ENCODE measurements at regions of chr1 and their contacts with region 1.

Region 1: GRCh38 chr1:27603681-27604578 is at the start of gene AHDC1:
- DNase-seq: peak; percentile 96
- H3K4me3 ChIP-seq: peak within 1 kb of the TSS; percentile 87
- H3K27ac ChIP-seq: peak within 1 kb of the TSS; percentile 87
- H3K4me1 ChIP-seq: peaks cover 50% of the 10 kb centered on the region
- H3K27me3 ChIP-seq: no peaks in the 10 kb centered on the region
- CTCF ChIP-seq: no peak
- total RNA-seq, gene AHDC1: 33.2 and 34.2 TPM in 2 replicates

Region 2: GRCh38 chr1:27300341-27301051 is 303.4 kb before region 1 on chr1:
- CTCF ChIA-PET with region 1: interaction called, 7 read pairs
- POLR2A ChIA-PET with region 1: no interaction called
- intact Hi-C with region 1: loop called (anchors 5 kb)
- DNase-seq: peak; percentile 92
- H3K4me3 ChIP-seq: no peak overlapping the region
- H3K27ac ChIP-seq: no peak overlapping the region
- H3K4me1 ChIP-seq: peaks cover 4% of the 10 kb centered on the region
- H3K27me3 ChIP-seq: no peaks in the 10 kb centered on the region
- CTCF ChIP-seq: peak; percentile 96

Region 3: GRCh38 chr1:27392096-27392777 is 211.7 kb before region 1 on chr1 and contains the start of gene GPR3:
- CTCF ChIA-PET with region 1: interaction called, 10 read pairs
- POLR2A ChIA-PET with region 1: no interaction called
- intact Hi-C with region 1: loop called (anchors 1 kb)
- DNase-seq: peak; percentile 96
- H3K4me3 ChIP-seq: peak within 1 kb of the TSS; percentile 81
- H3K27ac ChIP-seq: peak within 1 kb of the TSS; percentile 80
- H3K4me1 ChIP-seq: peaks cover 12% of the 10 kb centered on the region
- H3K27me3 ChIP-seq: no peaks in the 10 kb centered on the region
- CTCF ChIP-seq: peak; percentile 82
- total RNA-seq, gene GPR3: 3.1 and 4.9 TPM in 2 replicates

Region 4: GRCh38 chr1:27428316-27429028 is 175.5 kb before region 1 on chr1:
- CTCF ChIA-PET with region 1: interaction called, 13 read pairs
- POLR2A ChIA-PET with region 1: no interaction called
- intact Hi-C with region 1: no loop called
- DNase-seq: no peak
- H3K4me3 ChIP-seq: no peak overlapping the region
- H3K27ac ChIP-seq: peak overlapping the region; percentile 52
- H3K4me1 ChIP-seq: peaks cover 41% of the 10 kb centered on the region
- H3K27me3 ChIP-seq: no peaks in the 10 kb centered on the region
- CTCF ChIP-seq: no peak

Region 5: DNA sequence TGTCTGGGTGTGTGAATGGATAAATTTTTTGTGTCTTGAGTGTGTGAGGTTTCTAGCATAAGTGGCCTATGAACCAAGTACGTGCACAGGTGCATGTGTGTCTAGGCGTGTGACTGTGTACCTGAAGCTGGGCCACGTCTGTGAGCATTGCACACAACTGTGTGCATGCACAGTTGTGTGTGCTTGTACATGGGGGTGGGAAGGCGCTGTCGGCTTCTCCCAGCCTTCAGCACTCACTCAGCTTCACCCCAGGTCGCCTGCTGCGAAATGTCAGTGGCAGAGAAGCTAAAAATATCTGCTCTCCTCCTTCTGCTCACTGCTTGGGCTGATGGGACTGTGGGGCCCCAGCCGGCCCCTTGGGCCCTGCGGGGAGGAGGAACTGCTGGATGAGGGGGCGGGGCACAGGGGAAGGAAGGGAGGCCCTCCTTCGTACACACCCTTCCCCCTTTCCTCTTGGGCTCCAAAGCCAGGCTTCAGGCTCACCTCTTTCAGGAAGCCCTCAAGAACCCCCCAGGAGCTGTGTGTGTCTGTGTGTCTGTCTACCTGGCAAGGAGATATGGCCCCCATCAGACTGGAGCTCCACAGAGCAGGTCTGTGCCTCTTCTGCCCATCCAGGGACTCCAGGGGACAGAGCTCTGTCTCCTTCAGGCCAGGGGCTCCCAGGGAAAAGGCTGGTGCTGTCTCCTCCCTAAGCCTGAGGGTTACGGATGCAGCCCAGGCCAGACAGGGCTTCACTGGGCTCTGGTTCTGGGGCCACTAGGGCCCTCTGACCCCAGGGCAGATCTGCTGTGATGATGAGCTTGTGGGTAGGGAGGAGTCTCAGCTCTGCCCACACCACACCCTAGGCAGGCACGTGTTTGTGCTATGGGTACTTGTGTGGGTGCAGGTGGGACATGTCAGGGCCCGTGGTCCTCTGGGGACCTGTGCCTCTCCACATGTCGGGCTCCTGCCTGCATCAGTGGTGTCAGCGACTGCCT is 78.3 kb before region 1 on chr1:
- CTCF ChIA-PET with region 1: no interaction called
- POLR2A ChIA-PET with region 1: no interaction called
- intact Hi-C with region 1: no loop called
- DNase-seq: peak; percentile 82
- H3K4me3 ChIP-seq: no peak overlapping the region
- H3K27ac ChIP-seq: peak overlapping the region; percentile 68
- H3K4me1 ChIP-seq: peaks cover 67% of the 10 kb centered on the region
- H3K27me3 ChIP-seq: no peaks in the 10 kb centered on the region
- CTCF ChIP-seq: no peak

Region 6: DNA sequence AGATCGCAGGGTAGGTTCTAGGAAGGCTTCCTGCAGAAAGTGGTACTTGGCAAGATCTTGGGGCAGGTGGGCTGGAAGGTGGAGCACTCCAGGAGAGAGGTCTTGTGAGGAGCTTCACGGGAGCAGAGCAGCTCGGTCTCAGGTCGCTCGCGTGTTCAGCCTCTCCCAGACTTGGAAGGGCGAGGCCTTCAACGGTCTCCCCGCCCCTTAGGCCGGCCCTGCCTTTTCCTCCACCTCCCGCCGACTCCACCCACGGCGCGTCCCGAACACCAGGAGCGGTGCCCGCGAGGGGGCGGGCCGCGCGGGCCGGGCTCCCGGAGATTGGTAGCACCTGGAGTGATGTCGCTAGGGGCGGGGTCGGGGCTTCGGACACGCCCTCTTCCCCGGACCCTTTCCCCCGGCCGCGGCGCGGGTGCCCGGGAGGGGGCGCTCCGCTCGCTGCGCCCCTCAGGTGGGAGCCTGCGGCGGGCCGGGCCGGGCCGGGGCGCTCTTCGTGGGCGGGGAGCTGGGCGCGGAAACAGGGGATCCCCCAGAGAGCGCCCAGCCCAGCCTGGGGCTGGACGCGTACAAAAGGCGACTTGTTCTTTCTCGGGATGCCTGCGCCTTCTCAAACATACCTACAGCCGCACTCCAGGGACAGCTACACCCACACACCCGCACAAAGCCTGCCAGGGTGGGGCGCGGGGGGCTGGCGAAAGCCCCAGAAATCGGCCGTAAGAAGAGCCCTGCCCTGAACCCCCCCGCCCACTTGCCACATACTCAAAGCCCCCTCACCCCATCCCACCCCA is 35.4 kb before region 1 on chr1:
- CTCF ChIA-PET with region 1: interaction called, 11 read pairs
- POLR2A ChIA-PET with region 1: interaction called, 20 read pairs
- intact Hi-C with region 1: no loop called
- DNase-seq: peak; percentile 98
- H3K4me3 ChIP-seq: peak overlapping the region; percentile 37
- H3K27ac ChIP-seq: peak overlapping the region; percentile 2
- H3K4me1 ChIP-seq: peaks cover 37% of the 10 kb centered on the region
- H3K27me3 ChIP-seq: no peaks in the 10 kb centered on the region
- CTCF ChIP-seq: peak; percentile 71

Region 7: DNA sequence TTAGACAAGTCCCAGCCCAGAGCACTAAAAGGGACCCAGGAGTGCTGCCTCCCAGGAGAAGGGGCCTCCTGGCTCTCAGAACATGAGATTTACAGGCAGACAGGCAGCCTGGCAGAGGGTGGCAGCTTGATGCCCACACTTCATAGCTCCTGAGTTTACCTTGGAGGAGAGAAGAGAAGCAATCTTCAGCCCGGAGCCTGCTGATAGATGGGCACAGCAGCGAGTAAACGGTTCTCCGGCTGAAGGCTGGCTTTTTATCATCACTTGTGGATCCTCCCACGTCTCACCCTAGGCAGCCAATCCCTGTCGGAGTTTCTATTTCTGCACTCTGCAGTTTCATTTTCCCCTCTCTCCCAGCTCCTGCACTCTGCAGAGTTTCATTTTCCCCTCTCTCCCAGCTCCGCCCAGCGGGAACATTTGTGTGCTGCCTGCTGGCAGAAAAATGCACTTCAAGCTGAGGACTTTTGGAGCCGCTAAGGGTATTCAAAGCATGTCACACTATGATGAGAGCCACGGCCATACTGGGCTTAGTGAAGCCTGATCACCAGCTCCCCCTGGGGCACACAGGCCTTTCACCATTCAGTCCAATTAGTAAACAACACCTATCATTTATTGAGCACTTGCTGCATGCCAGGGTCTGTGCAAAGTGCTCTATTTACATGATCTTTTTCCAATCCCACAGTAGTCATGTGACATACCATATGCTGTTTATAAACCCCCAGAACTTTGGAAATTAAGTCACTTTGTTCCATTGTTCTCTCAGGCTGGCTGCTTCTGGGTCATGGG is 68.2 kb after region 1 on chr1 and contains the start of gene IFI6:
- CTCF ChIA-PET with region 1: interaction called, 5 read pairs
- POLR2A ChIA-PET with region 1: interaction called, 20 read pairs
- intact Hi-C with region 1: no loop called
- DNase-seq: peak; percentile 99
- H3K4me3 ChIP-seq: peak within 1 kb of the TSS; percentile 40
- H3K27ac ChIP-seq: peak within 1 kb of the TSS; percentile 62
- H3K4me1 ChIP-seq: peaks cover 9% of the 10 kb centered on the region
- H3K27me3 ChIP-seq: no peaks in the 10 kb centered on the region
- CTCF ChIP-seq: peak; percentile 49
- total RNA-seq, gene IFI6: 18.7 and 19.4 TPM in 2 replicates

Measured in A673 (cell line).